BJ (cell line): ENCODE measurements at regions of chr3 and their contacts with region 1.

Region 1: GRCh38 chr3:27544372-27544865 is 60.2 kb upstream of the SLC4A7 start:
- DNase-seq: peak; percentile 65
- H3K4me3 ChIP-seq: no peak overlapping the region
- H3K27me3 ChIP-seq: no peaks in the 10 kb centered on the region
- CTCF ChIP-seq: no peak

Region 2: GRCh38 chr3:27568393-27568792 is 24.0 kb after region 1 on chr3:
- CTCF ChIA-PET with region 1: no interaction called
- POLR2A ChIA-PET with region 1: interaction called, 11 read pairs
- DNase-seq: peak; percentile 51
- H3K4me3 ChIP-seq: no peak overlapping the region
- H3K27me3 ChIP-seq: no peaks in the 10 kb centered on the region
- CTCF ChIP-seq: no peak